Activated CD4-positive, alpha-beta T cell treated with anti-CD3 and anti-CD28 coated beads, Interleukin-2, amount 10 ng/mL, durations not matched to agents 7 days and 5 days (primary cell): ENCODE measurements at regions of chr12 and their contacts with region 1.

Region 1: GRCh38 chr12:46523863-46524770 is 151.5 kb upstream of the SLC38A2 start:
- DNase-seq: peak; percentile 75
- H3K4me3 Mint-ChIP-seq: peak overlapping the region; percentile 64
- H3K27ac Mint-ChIP-seq: peak overlapping the region; percentile 98
- H3K4me1 Mint-ChIP-seq: peaks cover 61% of the 10 kb centered on the region
- H3K27me3 Mint-ChIP-seq: no peaks in the 10 kb centered on the region

Region 2: DNA sequence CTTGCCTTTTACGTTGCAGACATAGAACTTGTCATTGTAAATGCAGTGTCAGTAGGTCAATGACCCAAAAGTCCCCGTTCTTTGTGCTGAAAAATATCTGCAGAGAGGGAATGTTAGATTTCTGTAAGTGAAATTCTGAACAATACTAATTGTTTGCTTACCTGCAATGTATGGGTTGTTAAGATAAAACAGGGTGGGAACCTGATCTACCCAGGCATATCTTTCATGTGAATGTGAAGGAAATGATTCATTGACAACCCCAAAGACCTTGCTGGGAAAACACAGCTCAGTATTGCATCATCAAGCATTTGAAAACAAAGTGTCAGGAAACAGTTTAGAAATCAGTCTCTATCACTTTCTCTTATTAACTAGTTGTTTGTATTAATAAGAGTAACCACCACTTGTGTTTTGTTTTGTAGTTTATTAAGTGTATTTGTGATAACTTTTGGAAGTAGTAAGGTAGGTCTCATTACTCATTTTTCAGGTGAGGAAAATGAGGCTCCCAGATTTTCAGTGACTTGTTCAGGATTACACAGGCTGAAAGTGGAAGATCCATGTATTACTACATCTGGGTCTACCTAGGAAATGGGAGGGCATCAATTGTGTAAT is 93.7 kb before region 1 on chr12:
- CTCF ChIA-PET with region 1: no interaction called
- POLR2A ChIA-PET with region 1: interaction called, 14 read pairs
- DNase-seq: peak; percentile 30
- H3K4me3 Mint-ChIP-seq: no peak overlapping the region
- H3K27ac Mint-ChIP-seq: peak overlapping the region; percentile 33
- H3K4me1 Mint-ChIP-seq: peaks cover 20% of the 10 kb centered on the region
- H3K27me3 Mint-ChIP-seq: no peaks in the 10 kb centered on the region

Region 3: GRCh38 chr12:46492471-46493351 is 31.4 kb before region 1 on chr12:
- CTCF ChIA-PET with region 1: no interaction called
- POLR2A ChIA-PET with region 1: no interaction called
- DNase-seq: no peak
- H3K4me3 Mint-ChIP-seq: no peak overlapping the region
- H3K27ac Mint-ChIP-seq: no peak overlapping the region
- H3K4me1 Mint-ChIP-seq: no peaks in the 10 kb centered on the region
- H3K27me3 Mint-ChIP-seq: no peaks in the 10 kb centered on the region

Region 4: GRCh38 chr12:46886541-46887041 is 362.5 kb after region 1 on chr12:
- CTCF ChIA-PET with region 1: no interaction called
- POLR2A ChIA-PET with region 1: no interaction called
- DNase-seq: no peak
- H3K4me3 Mint-ChIP-seq: no peak overlapping the region
- H3K27ac Mint-ChIP-seq: no peak overlapping the region
- H3K4me1 Mint-ChIP-seq: no peaks in the 10 kb centered on the region
- H3K27me3 Mint-ChIP-seq: peaks cover 9% of the 10 kb centered on the region